ENCODE measurements at regions of chr19 and their contacts with region 1.

Region 1: GRCh38 chr19:20999731-21000352 is 20.6 kb upstream of the ZNF430 start:
- DNase-seq: peak; percentile 94
- ATAC-seq: peak; percentile 100
- H3K4me3 Mint-ChIP-seq: peak overlapping the region; percentile 95
- H3K27ac Mint-ChIP-seq: peak overlapping the region; percentile 96
- H3K4me1 Mint-ChIP-seq: peaks cover 27% of the 10 kb centered on the region
- H3K27me3 Mint-ChIP-seq: no peaks in the 10 kb centered on the region

Region 2: DNA sequence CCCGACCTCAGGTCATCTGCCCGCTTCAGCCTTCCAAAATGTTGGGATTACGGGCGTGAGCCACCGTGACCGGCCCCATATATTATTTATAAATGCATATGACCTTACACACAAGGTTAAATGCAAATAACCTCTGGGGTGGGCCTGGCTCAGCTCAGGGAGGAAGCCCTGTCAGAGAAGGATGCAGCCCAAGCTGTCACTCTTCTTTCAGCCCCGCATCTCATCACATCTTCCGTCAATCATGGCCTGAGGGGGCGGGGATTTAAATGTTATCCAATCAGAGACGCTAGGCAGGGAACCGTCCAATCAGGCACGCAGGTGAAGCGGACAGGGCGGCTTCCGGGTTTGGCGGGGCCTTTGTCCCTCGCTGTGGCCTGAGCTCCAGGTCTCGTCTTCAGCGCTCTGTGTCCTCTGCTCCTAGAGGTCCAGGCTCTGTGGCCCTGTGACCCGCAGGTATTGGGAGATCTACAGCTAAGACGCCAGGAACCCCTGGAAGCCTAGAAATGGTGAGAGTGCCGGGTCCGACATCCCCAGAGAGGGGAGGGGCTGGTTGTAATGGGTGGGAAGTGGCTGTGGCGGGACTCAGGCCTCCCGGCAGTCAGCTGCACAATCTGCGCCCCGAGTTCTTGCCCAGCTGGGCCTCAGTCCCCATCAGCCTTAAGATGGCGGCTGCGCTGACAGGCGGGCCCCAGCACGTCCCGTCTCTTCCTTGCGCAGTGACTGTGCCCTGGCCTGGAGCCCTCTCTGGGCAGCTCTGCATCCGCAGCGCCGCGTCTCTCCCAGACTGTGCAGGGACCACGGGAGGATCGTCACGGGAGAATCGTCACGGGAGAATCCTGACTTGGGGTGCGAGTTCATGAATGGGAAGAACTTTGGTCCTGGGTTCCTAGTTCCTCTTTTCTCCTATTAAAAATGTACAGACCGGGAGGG is 20.7 kb after region 1 on chr19 and contains the start of gene ZNF430:
- CTCF ChIA-PET with region 1: interaction called, 3 read pairs
- POLR2A ChIA-PET with region 1: interaction called, 27 read pairs
- DNase-seq: peak; percentile 98
- ATAC-seq: peak; percentile 96
- H3K4me3 Mint-ChIP-seq: peak within 1 kb of the TSS; percentile 99
- H3K27ac Mint-ChIP-seq: peak within 1 kb of the TSS; percentile 99
- H3K4me1 Mint-ChIP-seq: peaks cover 35% of the 10 kb centered on the region
- H3K27me3 Mint-ChIP-seq: no peaks in the 10 kb centered on the region
- total RNA-seq, gene ZNF430: 22.0 to 25.5 TPM

Region 3: GRCh38 chr19:21109116-21109515 is 109.3 kb after region 1 on chr19:
- CTCF ChIA-PET with region 1: no interaction called
- POLR2A ChIA-PET with region 1: no interaction called
- DNase-seq: no peak
- ATAC-seq: no peak
- H3K4me3 Mint-ChIP-seq: no peak overlapping the region
- H3K27ac Mint-ChIP-seq: no peak overlapping the region
- H3K4me1 Mint-ChIP-seq: no peaks in the 10 kb centered on the region
- H3K27me3 Mint-ChIP-seq: no peaks in the 10 kb centered on the region